B cell (primary cell): ENCODE measurements at regions of chr7 and their contacts with region 1.

Region 1: GRCh38 chr7:106865130-106866041 is at the start of gene PIK3CG:
- DNase-seq: peak; percentile 90
- ATAC-seq: peak; percentile 75
- H3K4me3 ChIP-seq: peak within 1 kb of the TSS; percentile 72 to 100 (median 81)
- H3K4me3 Mint-ChIP-seq: peak within 1 kb of the TSS; percentile 89
- H3K27ac ChIP-seq: peak within 1 kb of the TSS; percentile 92
- H3K27ac Mint-ChIP-seq: peak within 1 kb of the TSS; percentile 86
- H3K4me1 ChIP-seq: peaks cover 49 to 57% of the 10 kb centered on the region in 2 donors
- H3K4me1 Mint-ChIP-seq: peaks cover 77% of the 10 kb centered on the region
- H3K27me3 ChIP-seq: no peaks in the 10 kb centered on the region
- H3K27me3 Mint-ChIP-seq: no peaks in the 10 kb centered on the region
- CTCF ChIP-seq: no peak
- total RNA-seq, gene PIK3CG: 44.8 and 46.9 TPM in 2 replicates

Region 2: DNA sequence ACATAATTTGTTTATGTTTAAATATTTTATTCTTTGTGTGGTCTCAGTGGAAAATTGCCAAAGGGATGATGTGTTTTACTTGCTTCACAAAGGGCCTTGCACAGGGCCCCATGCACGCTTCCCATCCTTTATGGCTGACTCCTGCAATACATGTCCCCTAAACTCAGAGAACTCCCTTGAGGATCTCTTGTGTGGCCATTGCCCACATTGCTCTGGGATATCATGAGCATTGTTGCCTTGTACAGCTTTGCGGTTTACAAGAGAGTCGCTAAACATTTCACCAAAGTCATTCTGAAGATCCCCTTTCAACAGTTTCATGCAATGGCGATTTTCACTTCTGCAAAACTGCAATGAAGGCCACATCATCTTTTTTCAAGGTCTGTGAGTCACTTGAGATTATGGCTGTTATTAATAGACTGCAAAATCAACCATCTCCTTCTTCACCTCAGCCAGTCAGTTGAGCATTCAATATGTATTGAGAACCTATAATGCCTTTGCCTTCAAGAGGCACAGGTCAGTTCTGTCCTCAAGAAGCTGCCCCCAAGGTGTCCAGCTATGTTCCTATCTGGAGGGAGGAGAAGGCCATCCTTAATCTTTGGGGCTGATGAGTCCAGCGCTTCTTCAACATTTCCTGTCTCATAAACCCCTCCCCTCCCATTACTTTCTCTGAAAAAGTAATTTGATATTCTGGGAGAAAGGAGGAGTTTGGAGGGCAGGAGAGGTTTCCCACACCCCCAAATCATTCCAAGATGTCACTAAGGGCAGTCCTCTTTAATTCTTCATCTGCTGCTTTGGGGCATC is 312.5 kb before region 1 on chr7:
- CTCF ChIA-PET with region 1: no interaction called
- POLR2A ChIA-PET with region 1: no interaction called
- intact Hi-C with region 1: loop called (anchors 10 kb)
- DNase-seq: peak; percentile 84
- ATAC-seq: peak; percentile 91
- H3K4me3 ChIP-seq: no peak overlapping the region
- H3K4me3 Mint-ChIP-seq: peak overlapping the region; percentile 40
- H3K27ac ChIP-seq: peak overlapping the region in 1 of 2 donors; percentile 23
- H3K27ac Mint-ChIP-seq: peak overlapping the region; percentile 73
- H3K4me1 ChIP-seq: peaks cover 18 to 20% of the 10 kb centered on the region in 2 donors
- H3K4me1 Mint-ChIP-seq: peaks cover 31% of the 10 kb centered on the region
- H3K27me3 ChIP-seq: no peaks in the 10 kb centered on the region
- H3K27me3 Mint-ChIP-seq: no peaks in the 10 kb centered on the region
- CTCF ChIP-seq: no peak

Region 3: DNA sequence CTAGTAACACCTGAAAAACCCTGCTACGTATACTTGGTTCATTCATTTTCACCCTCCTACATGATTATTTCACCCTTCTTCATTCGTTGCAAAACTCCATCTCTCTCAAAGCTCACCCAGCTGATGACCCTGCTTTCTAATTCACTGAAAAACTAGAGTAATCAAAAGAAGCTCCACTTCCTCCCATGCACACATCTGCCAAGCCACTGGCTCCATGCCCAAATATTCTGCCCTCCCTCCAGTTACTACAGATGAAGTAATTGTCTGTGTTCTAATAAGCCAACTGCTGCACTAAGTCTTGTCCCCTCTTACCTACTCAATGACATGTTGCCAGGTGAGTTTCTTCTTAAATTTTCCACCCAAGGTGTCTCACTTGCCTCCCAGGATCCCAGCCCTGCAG is 107.5 kb before region 1 on chr7:
- CTCF ChIA-PET with region 1: no interaction called
- POLR2A ChIA-PET with region 1: no interaction called
- intact Hi-C with region 1: no loop called
- DNase-seq: no peak
- ATAC-seq: no peak
- H3K4me3 ChIP-seq: no peak overlapping the region
- H3K4me3 Mint-ChIP-seq: no peak overlapping the region
- H3K27ac ChIP-seq: no peak overlapping the region
- H3K27ac Mint-ChIP-seq: no peak overlapping the region
- H3K4me1 ChIP-seq: no peaks in the 10 kb centered on the region
- H3K4me1 Mint-ChIP-seq: no peaks in the 10 kb centered on the region
- H3K27me3 ChIP-seq: no peaks in the 10 kb centered on the region
- H3K27me3 Mint-ChIP-seq: no peaks in the 10 kb centered on the region
- CTCF ChIP-seq: no peak

Region 4: DNA sequence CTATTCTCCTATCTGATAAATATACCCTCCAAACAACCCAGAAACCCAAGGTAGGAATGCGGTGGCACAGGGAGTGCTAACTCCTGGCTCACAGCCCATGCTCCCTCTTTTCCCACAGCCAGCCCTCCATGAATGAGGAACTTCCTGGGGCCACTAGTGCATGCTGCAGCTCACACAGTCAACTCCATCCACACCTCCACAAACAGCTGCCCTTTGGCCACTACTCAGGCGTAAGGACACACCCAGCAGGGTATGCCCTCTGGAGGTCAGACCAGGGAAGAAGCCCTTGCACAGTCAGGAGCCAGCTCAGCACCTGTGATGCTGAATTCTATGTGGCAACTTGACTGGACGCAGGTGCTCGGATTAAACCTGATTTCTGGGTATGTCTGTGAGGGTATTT is 85.5 kb before region 1 on chr7:
- CTCF ChIA-PET with region 1: no interaction called
- POLR2A ChIA-PET with region 1: no interaction called
- intact Hi-C with region 1: no loop called
- DNase-seq: no peak
- ATAC-seq: no peak
- H3K4me3 ChIP-seq: no peak overlapping the region
- H3K4me3 Mint-ChIP-seq: no peak overlapping the region
- H3K27ac ChIP-seq: no peak overlapping the region
- H3K27ac Mint-ChIP-seq: no peak overlapping the region
- H3K4me1 ChIP-seq: no peaks in the 10 kb centered on the region
- H3K4me1 Mint-ChIP-seq: no peaks in the 10 kb centered on the region
- H3K27me3 ChIP-seq: no peaks in the 10 kb centered on the region
- H3K27me3 Mint-ChIP-seq: no peaks in the 10 kb centered on the region
- CTCF ChIP-seq: no peak

Region 5: GRCh38 chr7:106883456-106884026 is 18.2 kb after region 1 on chr7:
- CTCF ChIA-PET with region 1: no interaction called
- POLR2A ChIA-PET with region 1: no interaction called
- intact Hi-C with region 1: loop called (anchors 2 kb)
- DNase-seq: peak; percentile 35
- ATAC-seq: peak; percentile 71
- H3K4me3 ChIP-seq: no peak overlapping the region
- H3K4me3 Mint-ChIP-seq: peak overlapping the region; percentile 66
- H3K27ac ChIP-seq: no peak overlapping the region
- H3K27ac Mint-ChIP-seq: peak overlapping the region; percentile 62
- H3K4me1 ChIP-seq: peaks cover 15% of the 10 kb centered on the region in 2 donors
- H3K4me1 Mint-ChIP-seq: peaks cover 31% of the 10 kb centered on the region
- H3K27me3 ChIP-seq: no peaks in the 10 kb centered on the region
- H3K27me3 Mint-ChIP-seq: no peaks in the 10 kb centered on the region
- CTCF ChIP-seq: no peak

Region 6: DNA sequence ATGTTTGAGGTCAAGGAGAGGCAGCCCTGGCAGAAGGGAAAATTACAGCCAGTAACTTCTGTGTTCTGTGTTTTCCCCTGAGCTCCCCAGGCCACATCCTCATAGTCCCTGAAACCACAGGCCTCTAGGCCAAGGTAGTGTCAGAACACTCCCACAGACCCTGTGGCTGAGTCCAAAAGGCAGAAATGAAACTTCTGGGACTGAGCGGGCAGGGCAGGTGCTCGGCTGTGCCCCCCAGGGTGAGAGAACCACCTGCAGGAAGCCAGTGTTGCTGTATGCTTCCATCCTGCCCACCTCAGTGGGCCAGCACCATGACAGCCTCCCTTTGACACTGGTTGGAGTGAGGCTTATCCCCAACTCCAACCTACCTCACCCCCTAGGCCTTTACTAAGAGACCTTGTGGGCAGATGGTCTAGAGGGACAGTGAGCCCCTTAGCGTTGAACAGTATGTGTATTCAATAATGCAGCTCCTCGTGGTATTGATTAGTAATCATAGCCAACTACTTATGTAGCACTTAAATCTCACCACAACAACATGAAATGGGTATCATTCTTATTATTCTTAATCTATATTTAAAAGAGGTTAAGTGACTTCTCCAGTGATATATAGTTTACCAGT is 30.0 kb after region 1 on chr7:
- CTCF ChIA-PET with region 1: no interaction called
- POLR2A ChIA-PET with region 1: no interaction called
- intact Hi-C with region 1: loop called (anchors 2 kb)
- DNase-seq: peak; percentile 74
- ATAC-seq: peak; percentile 86
- H3K4me3 ChIP-seq: no peak overlapping the region
- H3K4me3 Mint-ChIP-seq: peak overlapping the region; percentile 48
- H3K27ac ChIP-seq: peak overlapping the region; percentile 28 to 70
- H3K27ac Mint-ChIP-seq: peak overlapping the region; percentile 80
- H3K4me1 ChIP-seq: peaks cover 20 to 25% of the 10 kb centered on the region in 2 donors
- H3K4me1 Mint-ChIP-seq: peaks cover 66% of the 10 kb centered on the region
- H3K27me3 ChIP-seq: no peaks in the 10 kb centered on the region
- H3K27me3 Mint-ChIP-seq: no peaks in the 10 kb centered on the region
- CTCF ChIP-seq: no peak

Region 7: GRCh38 chr7:107044347-107045194 is 179.2 kb after region 1 on chr7 and contains the start of gene PRKAR2B:
- CTCF ChIA-PET with region 1: no interaction called
- POLR2A ChIA-PET with region 1: no interaction called
- intact Hi-C with region 1: loop called (anchors 2 kb)
- DNase-seq: peak; percentile 86
- ATAC-seq: peak; percentile 94
- H3K4me3 ChIP-seq: peak within 1 kb of the TSS; percentile 41 to 69 (median 53)
- H3K4me3 Mint-ChIP-seq: peak within 1 kb of the TSS; percentile 92
- H3K27ac ChIP-seq: no peak within 1 kb of the TSS
- H3K27ac Mint-ChIP-seq: peak within 1 kb of the TSS; percentile 69
- H3K4me1 ChIP-seq: peaks cover 7 to 13% of the 10 kb centered on the region in 2 donors
- H3K4me1 Mint-ChIP-seq: peaks cover 13% of the 10 kb centered on the region
- H3K27me3 ChIP-seq: peaks cover 0 to 26% (median 24%) of the 10 kb centered on the region in 4 experiments
- H3K27me3 Mint-ChIP-seq: peaks cover 37% of the 10 kb centered on the region
- CTCF ChIP-seq: no peak
- total RNA-seq, gene PRKAR2B: 0.39 and 0.81 TPM in 2 replicates

Region 8: DNA sequence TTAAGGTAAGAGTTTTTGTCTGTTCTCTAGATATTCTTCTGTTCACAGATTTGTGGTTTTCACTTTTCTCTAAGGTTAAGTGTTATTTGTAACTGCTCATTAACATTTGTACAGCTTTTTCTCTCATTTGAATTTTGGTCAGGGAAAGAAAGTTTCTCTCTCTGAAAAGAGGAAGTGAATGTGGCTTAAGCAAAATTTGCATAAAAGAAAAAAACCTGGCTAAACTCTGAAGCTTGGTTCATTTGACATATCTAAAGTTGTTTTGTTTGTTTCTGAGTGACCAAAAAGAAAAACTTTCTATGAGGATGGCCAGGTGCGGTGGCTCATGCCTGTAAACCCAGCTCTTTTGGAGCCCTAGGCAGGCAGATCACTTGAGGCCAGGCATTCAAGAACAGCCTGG is 773.2 kb after region 1 on chr7:
- CTCF ChIA-PET with region 1: no interaction called
- POLR2A ChIA-PET with region 1: no interaction called
- intact Hi-C with region 1: loop called (anchors 1 kb)
- DNase-seq: peak; percentile 82
- ATAC-seq: peak; percentile 77
- H3K4me3 ChIP-seq: peak overlapping the region in 4 of 5 experiments; percentile 7 to 52 (median 26)
- H3K4me3 Mint-ChIP-seq: peak overlapping the region; percentile 77
- H3K27ac ChIP-seq: peak overlapping the region; percentile 78 to 85
- H3K27ac Mint-ChIP-seq: peak overlapping the region; percentile 96
- H3K4me1 ChIP-seq: peaks cover 44 to 56% of the 10 kb centered on the region in 2 donors
- H3K4me1 Mint-ChIP-seq: peaks cover 56% of the 10 kb centered on the region
- H3K27me3 ChIP-seq: no peaks in the 10 kb centered on the region
- H3K27me3 Mint-ChIP-seq: no peaks in the 10 kb centered on the region
- CTCF ChIP-seq: no peak